ENCODE measurements at regions of chr2 and their contacts with region 1.

Region 1: GRCh38 chr2:27303093-27304025 is 4.9 kb downstream of the UCN start:
- DNase-seq: no peak
- ATAC-seq: peak; percentile 82
- H3K4me3 ChIP-seq: peak overlapping the region; percentile 48; the same call in 1 of the 2 replicates
- H3K27ac ChIP-seq: no peak overlapping the region
- H3K4me1 ChIP-seq: no peaks in the 10 kb centered on the region
- H3K27me3 ChIP-seq: no peaks in the 10 kb centered on the region; a peak in 1 of 4 replicates
- CTCF ChIP-seq: peak; percentile 75 to 83 (median 80)
- EP300 ChIP-seq: no peak
- POLR2A ChIP-seq: no peak
- RAD21 ChIP-seq: peak; percentile 72

Region 2: DNA sequence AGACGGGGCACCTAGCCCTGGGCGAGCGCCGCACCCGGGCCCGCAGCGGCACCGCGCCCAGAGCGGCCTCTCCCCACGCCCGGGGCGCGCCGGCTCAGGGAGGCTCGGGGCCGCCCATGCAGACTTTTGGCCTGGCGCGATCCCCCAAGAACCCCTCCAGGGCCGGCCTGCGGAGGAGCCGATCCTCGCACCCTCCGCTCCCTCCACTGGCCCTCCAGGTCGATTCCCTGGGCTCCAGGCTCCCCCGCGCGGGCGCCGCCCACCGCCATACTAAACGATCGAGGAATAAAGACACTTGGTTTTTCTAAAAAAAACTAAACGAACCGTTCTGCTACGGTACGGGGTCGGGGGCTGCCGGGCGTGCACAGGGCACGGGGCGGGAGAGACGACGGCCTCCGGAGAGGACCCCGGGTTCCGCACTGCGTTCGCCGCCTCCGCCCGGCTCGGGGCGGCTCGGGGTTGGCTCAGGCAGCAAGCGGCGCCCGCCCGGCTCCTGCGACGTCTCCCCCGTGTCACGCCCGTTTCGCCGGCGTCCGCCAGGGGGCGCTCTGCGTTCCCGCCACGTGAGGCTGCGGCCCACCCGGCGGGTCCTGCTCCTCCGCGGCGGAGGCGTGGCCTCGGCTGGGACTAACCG is 217.2 kb before region 1 on chr2:
- CTCF ChIA-PET with region 1: interaction called, 10 read pairs
- POLR2A ChIA-PET with region 1: no interaction called
- RAD21 ChIA-PET with region 1: no interaction called
- SMC1A ChIA-PET with region 1: no interaction called
- in situ Hi-C with region 1: no loop called
- intact Hi-C with region 1: no loop called
- DNase-seq: peak; percentile 73
- ATAC-seq: peak; percentile 92
- H3K4me3 ChIP-seq: peak overlapping the region; percentile 85
- H3K27ac ChIP-seq: peak overlapping the region; percentile 67
- H3K4me1 ChIP-seq: peaks cover 19% of the 10 kb centered on the region
- H3K27me3 ChIP-seq: no peaks in the 10 kb centered on the region
- CTCF ChIP-seq: peak; percentile 77 to 95 (median 83)
- EP300 ChIP-seq: no peak
- POLR2A ChIP-seq: peak; percentile 80
- RAD21 ChIP-seq: peak; percentile 47

Region 3: GRCh38 chr2:27174316-27175040 is 128.9 kb before region 1 on chr2:
- CTCF ChIA-PET with region 1: interaction called, 15 read pairs
- POLR2A ChIA-PET with region 1: no interaction called
- RAD21 ChIA-PET with region 1: interaction called, 7 read pairs
- SMC1A ChIA-PET with region 1: no interaction called
- in situ Hi-C with region 1: no loop called
- intact Hi-C with region 1: no loop called
- DNase-seq: no peak
- ATAC-seq: peak; percentile 46; the same call in 2 of the 3 replicates
- H3K4me3 ChIP-seq: no peak overlapping the region
- H3K27ac ChIP-seq: no peak overlapping the region
- H3K4me1 ChIP-seq: peaks cover 15% of the 10 kb centered on the region
- H3K27me3 ChIP-seq: no peaks in the 10 kb centered on the region; a peak in 1 of 4 replicates
- CTCF ChIP-seq: no peak
- EP300 ChIP-seq: no peak
- POLR2A ChIP-seq: no peak
- RAD21 ChIP-seq: no peak

Region 4: GRCh38 chr2:27281855-27282559 is 21.4 kb before region 1 on chr2 and contains the start of gene TRIM54:
- CTCF ChIA-PET with region 1: interaction called, 39 read pairs
- POLR2A ChIA-PET with region 1: no interaction called
- RAD21 ChIA-PET with region 1: interaction called, 25 read pairs
- SMC1A ChIA-PET with region 1: interaction called, 17 read pairs
- in situ Hi-C with region 1: no loop called
- intact Hi-C with region 1: no loop called
- DNase-seq: no peak
- ATAC-seq: no peak
- H3K4me3 ChIP-seq: no peak within 1 kb of the TSS
- H3K27ac ChIP-seq: no peak within 1 kb of the TSS
- H3K4me1 ChIP-seq: no peaks in the 10 kb centered on the region
- H3K27me3 ChIP-seq: peaks cover 0 to 6% of the 10 kb centered on the region in 2 experiments; a peak in 2 of 4 replicates
- CTCF ChIP-seq: no peak
- EP300 ChIP-seq: no peak
- POLR2A ChIP-seq: no peak
- RAD21 ChIP-seq: no peak
- polyA plus RNA-seq, gene TRIM54: not detected

Region 5: GRCh38 chr2:27322766-27323595 is 19.6 kb after region 1 on chr2 and contains the start of gene MPV17:
- CTCF ChIA-PET with region 1: interaction called, 49 read pairs
- POLR2A ChIA-PET with region 1: no interaction called
- RAD21 ChIA-PET with region 1: interaction called, 6 read pairs
- SMC1A ChIA-PET with region 1: interaction called, 3 read pairs
- in situ Hi-C with region 1: no loop called
- intact Hi-C with region 1: no loop called
- DNase-seq: peak; percentile 61
- ATAC-seq: peak; percentile 97
- H3K4me3 ChIP-seq: peak within 1 kb of the TSS; percentile 99
- H3K27ac ChIP-seq: peak within 1 kb of the TSS; percentile 95
- H3K4me1 ChIP-seq: peaks cover 6% of the 10 kb centered on the region
- H3K27me3 ChIP-seq: no peaks in the 10 kb centered on the region
- CTCF ChIP-seq: no peak
- EP300 ChIP-seq: 0 out of 4 replicates have a peak, but pooled peaks of 1 of the 2 experiments have one; percentile 12
- POLR2A ChIP-seq: peak; percentile 95
- RAD21 ChIP-seq: no peak
- polyA plus RNA-seq, gene MPV17: 67.6 to 69.8 TPM

Region 6: DNA sequence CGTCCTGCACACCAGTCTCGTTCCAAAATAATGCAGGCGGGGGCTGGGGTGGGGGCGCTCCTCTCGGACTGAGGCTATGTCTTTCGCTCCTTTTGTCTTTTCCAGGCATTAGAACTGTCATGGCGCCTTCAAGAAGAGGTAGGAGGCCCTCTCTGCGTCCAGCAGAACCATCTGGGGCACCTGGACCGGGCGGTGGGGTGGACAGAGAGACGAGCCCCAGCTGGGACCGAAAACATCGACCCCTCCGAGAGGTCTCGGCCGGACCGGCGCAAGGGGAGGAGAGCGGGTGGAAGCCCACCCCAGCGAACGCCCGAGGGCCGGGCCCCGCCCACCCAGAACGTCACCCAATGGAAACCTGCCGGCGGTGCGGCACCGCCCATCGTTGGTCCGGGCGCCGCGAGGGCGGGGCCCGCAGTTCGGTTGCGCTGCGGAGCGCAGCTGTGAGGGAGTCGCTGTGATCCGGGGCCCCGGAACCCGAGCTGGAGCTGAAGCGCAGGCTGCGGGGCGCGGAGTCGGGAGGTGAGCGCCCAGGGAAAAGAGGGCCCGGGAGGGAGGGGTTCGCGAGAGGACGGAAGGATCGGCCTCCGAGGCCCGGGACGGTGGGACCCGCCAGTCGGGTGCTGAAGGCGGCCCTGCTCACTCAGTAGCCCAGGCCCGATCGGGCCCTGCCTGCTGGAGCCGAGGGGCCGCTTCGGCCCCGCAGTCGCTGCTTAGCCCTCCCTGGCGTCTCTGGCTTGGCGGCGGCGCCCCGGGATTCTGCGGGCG is 125.0 kb after region 1 on chr2 and contains the start of gene NRBP1:
- CTCF ChIA-PET with region 1: interaction called, 5 read pairs
- POLR2A ChIA-PET with region 1: no interaction called
- RAD21 ChIA-PET with region 1: interaction called, 5 read pairs
- SMC1A ChIA-PET with region 1: interaction called, 12 read pairs
- in situ Hi-C with region 1: no loop called
- intact Hi-C with region 1: no loop called
- DNase-seq: peak; percentile 52
- ATAC-seq: peak; percentile 93
- H3K4me3 ChIP-seq: peak within 1 kb of the TSS; percentile 97
- H3K27ac ChIP-seq: peak within 1 kb of the TSS; percentile 85
- H3K4me1 ChIP-seq: no peaks in the 10 kb centered on the region
- H3K27me3 ChIP-seq: no peaks in the 10 kb centered on the region
- CTCF ChIP-seq: no peak
- EP300 ChIP-seq: no peak
- POLR2A ChIP-seq: peak; percentile 93
- RAD21 ChIP-seq: no peak
- polyA plus RNA-seq, gene NRBP1: 5.7 to 8.6 TPM

Region 7: GRCh38 chr2:27735263-27735953 is 432.0 kb after region 1 on chr2:
- CTCF ChIA-PET with region 1: no interaction called
- POLR2A ChIA-PET with region 1: no interaction called
- RAD21 ChIA-PET with region 1: no interaction called
- SMC1A ChIA-PET with region 1: no interaction called
- in situ Hi-C with region 1: no loop called
- intact Hi-C with region 1: no loop called
- DNase-seq: no peak
- ATAC-seq: peak; percentile 20; the same call in 2 of the 3 replicates
- H3K4me3 ChIP-seq: 0 out of 2 replicates have a peak overlapping the region, but pooled peaks have one; percentile 16
- H3K27ac ChIP-seq: no peak overlapping the region
- H3K4me1 ChIP-seq: peaks cover 2% of the 10 kb centered on the region; the same call in 1 of the 2 replicates
- H3K27me3 ChIP-seq: peaks cover 2 to 11% of the 10 kb centered on the region in 2 experiments
- CTCF ChIP-seq: no peak
- EP300 ChIP-seq: no peak
- POLR2A ChIP-seq: no peak
- RAD21 ChIP-seq: no peak

Region 8: DNA sequence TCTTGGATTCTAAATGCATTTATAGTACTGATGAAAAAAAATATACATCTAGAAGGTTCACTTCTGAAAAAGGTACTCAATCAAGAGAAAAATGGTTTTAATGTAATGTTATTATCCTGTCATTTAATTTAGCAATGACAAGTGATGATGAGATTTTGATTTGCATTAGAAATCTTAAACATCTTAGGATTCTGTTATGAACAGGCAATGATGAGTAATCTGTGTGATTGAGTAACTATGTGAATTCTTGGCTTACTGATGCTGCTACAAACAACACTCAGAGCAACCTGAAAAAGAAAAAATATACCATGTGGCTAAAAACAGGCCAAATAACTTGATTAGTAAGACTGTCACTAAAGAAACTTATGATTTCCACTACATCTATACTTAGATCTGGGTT is 556.8 kb after region 1 on chr2:
- CTCF ChIA-PET with region 1: no interaction called
- POLR2A ChIA-PET with region 1: no interaction called
- RAD21 ChIA-PET with region 1: no interaction called
- SMC1A ChIA-PET with region 1: no interaction called
- in situ Hi-C with region 1: no loop called
- intact Hi-C with region 1: no loop called
- DNase-seq: no peak
- ATAC-seq: no peak
- H3K4me3 ChIP-seq: no peak overlapping the region
- H3K27ac ChIP-seq: no peak overlapping the region
- H3K4me1 ChIP-seq: no peaks in the 10 kb centered on the region
- H3K27me3 ChIP-seq: no peaks in the 10 kb centered on the region
- CTCF ChIP-seq: no peak
- EP300 ChIP-seq: no peak
- POLR2A ChIP-seq: no peak
- RAD21 ChIP-seq: no peak